ENCODE measurements at regions of chr11 and their contacts with region 1.

Region 1: DNA sequence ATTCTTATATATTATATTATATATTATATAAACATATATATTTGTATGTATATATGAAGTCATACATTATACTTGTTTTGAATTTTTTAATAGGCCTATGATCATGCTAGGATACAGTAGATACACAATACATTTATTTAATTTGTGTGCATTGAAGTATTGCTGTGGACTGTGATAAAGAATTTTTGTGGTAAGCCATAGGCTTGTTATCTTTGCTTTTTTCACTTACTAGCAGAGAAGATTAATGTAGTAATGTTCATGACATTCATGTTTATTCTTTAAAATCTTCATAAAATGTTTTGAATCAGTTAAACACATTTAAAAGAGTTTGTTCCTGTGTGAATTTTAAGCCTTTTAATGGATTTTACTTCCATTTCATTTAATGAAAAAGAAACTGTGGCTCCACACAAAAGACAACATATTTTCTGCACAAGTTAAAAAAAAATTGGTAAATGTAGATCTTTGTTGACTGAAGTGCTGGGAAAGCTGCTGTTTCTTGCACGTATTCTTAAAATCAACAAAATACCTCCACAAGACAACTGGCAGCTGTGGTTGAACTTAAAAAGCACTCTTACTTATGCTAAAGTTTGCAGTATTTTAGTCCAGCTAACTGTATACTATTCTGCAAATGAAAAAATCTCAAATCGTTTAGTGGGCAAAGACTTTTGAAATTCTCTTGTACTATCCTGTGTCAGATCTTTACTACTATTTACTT is 156.2 kb downstream of the TMEM135 start:
- DNase-seq: no peak
- ATAC-seq: no peak
- H3K4me3 ChIP-seq: no peak overlapping the region
- H3K27ac ChIP-seq: no peak overlapping the region
- H3K4me1 ChIP-seq: no peaks in the 10 kb centered on the region
- H3K27me3 ChIP-seq: no peaks in the 10 kb centered on the region
- CTCF ChIP-seq: no peak
- EP300 ChIP-seq: no peak
- POLR2A ChIP-seq: no peak
- RAD21 ChIP-seq: no peak

Region 2: GRCh38 chr11:86969258-86969657 is 224.7 kb before region 1 on chr11:
- CTCF ChIA-PET with region 1: no interaction called
- POLR2A ChIA-PET with region 1: no interaction called
- in situ Hi-C with region 1: no loop called
- intact Hi-C with region 1: no loop called
- DNase-seq: peak; percentile 21
- ATAC-seq: peak; percentile 47; the same call in 2 of the 3 replicates
- H3K4me3 ChIP-seq: no peak overlapping the region
- H3K27ac ChIP-seq: no peak overlapping the region
- H3K4me1 ChIP-seq: peaks cover 14% of the 10 kb centered on the region; the same call in 1 of the 2 replicates
- H3K27me3 ChIP-seq: no peaks in the 10 kb centered on the region
- CTCF ChIP-seq: no peak
- EP300 ChIP-seq: no peak
- POLR2A ChIP-seq: no peak
- RAD21 ChIP-seq: no peak

Region 3: DNA sequence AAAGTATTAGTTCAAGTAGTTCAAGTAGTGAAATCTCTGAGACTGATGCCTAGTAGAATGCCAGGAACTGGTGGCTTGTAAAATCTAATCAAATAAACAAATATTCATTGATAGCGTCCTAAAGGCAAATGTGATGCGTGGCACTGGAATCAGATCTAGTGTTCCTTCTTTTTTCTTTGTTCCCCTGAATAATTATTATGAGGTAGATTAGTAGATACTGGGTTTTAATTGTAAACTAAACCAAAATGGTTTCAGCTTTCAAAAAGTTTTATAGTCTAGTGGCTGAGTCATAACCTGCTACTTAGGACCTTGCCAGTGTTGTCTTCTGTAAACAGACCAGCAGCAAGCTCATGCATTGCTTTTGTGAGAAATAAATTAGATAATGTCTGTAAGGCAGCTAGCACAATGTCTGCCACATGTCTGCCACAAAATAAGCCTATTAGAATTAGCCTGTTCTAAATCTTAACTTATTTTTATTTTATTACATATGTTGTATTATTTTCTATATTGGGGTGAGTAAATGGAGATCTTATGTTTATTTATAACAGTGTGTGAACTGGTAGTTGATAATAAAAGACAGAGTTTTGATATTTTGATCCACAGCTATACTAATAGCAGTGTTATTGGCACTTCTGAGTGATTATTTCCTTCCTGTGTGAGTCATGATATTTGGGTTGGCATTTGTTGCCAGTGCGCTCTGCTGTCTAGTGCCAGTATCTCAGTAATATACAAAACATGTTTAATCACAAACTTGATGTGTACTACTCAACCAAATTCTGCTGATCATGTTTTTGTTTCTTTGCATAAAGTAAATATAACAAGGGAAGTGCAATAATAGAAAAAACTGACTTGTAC is 20.5 kb before region 1 on chr11:
- CTCF ChIA-PET with region 1: no interaction called
- POLR2A ChIA-PET with region 1: no interaction called
- in situ Hi-C with region 1: no loop called
- intact Hi-C with region 1: loop called (anchors 1 kb)
- DNase-seq: peak; percentile 19
- ATAC-seq: peak; percentile 39; the same call in 1 of the 3 replicates
- H3K4me3 ChIP-seq: no peak overlapping the region
- H3K27ac ChIP-seq: no peak overlapping the region
- H3K4me1 ChIP-seq: peaks cover 54% of the 10 kb centered on the region
- H3K27me3 ChIP-seq: no peaks in the 10 kb centered on the region
- CTCF ChIP-seq: no peak
- EP300 ChIP-seq: no peak
- POLR2A ChIP-seq: no peak
- RAD21 ChIP-seq: no peak

Region 4: GRCh38 chr11:87213444-87213843 is 19.5 kb after region 1 on chr11:
- CTCF ChIA-PET with region 1: no interaction called
- POLR2A ChIA-PET with region 1: no interaction called
- in situ Hi-C with region 1: no loop called
- intact Hi-C with region 1: no loop called
- DNase-seq: no peak
- ATAC-seq: no peak
- H3K4me3 ChIP-seq: no peak overlapping the region
- H3K27ac ChIP-seq: no peak overlapping the region
- H3K4me1 ChIP-seq: no peaks in the 10 kb centered on the region
- H3K27me3 ChIP-seq: no peaks in the 10 kb centered on the region
- CTCF ChIP-seq: no peak
- EP300 ChIP-seq: no peak
- POLR2A ChIP-seq: no peak
- RAD21 ChIP-seq: no peak

Measured in HepG2 (cell line).